ENCODE measurements at regions of chr10 and their contacts with region 1.

Region 1: GRCh38 chr10:8767631-8768030 is 713.1 kb downstream of the GATA3 start:
- DNase-seq: no peak
- H3K4me3 ChIP-seq: no peak overlapping the region
- CTCF ChIP-seq: no peak

Region 2: GRCh38 chr10:8688881-8689280 is 78.8 kb before region 1 on chr10:
- in situ Hi-C with region 1: loop called (anchors 5 kb)
- DNase-seq: no peak
- H3K4me3 ChIP-seq: no peak overlapping the region
- CTCF ChIP-seq: no peak

Region 3: DNA sequence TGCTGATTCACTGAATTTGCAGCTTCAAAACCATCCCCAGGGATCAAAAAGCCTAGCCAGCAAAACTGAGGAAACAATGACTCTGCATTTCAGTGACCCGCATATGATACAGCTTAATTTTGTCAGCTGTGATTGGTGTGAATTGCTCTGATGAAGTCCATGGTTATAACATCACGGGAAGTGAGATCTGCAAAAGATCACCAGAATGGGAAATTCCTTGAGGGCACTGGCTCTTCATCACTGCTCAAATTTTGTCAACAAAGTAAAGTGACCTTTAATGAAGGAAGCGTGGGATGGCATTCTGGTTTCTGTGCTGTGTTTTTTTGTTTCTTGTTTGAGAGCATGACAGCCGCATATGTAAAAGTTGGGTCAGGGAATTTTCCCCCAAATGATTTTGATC is 32.8 kb after region 1 on chr10:
- in situ Hi-C with region 1: no loop called
- DNase-seq: no peak
- H3K4me3 ChIP-seq: no peak overlapping the region
- CTCF ChIP-seq: no peak